Esophagus muscularis mucosa (tissue), 4 donors: ENCODE measurements at regions of chr3 and their contacts with region 1.

Region 1: DNA sequence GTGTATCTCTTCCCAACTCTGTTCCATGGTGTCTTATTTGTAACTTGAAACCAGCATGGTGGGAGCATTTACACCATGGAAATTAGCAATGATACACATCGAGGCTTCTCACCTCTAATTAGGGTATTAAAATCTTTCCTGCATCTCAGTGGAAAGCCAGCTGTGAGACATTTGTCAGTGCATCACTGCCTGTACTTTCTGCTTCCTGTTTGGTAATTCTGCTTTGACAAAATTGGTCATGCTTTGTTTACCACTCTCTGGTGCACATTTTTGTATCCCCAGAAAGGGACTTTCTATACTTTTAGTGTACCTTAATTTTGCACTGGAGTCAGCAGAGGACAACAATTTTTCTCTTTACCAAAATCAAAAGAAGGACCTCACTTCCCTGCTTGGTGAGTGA is 402.1 kb downstream of the PDCD6IP start:
- DNase-seq: no peak
- H3K4me3 ChIP-seq: no peak overlapping the region
- H3K27ac ChIP-seq: no peak overlapping the region
- H3K4me1 ChIP-seq: peaks cover 0 to 14% (median 3%) of the 10 kb centered on the region in 4 donors
- H3K27me3 ChIP-seq: no peaks in the 10 kb centered on the region
- CTCF ChIP-seq: no peak
- EP300 ChIP-seq: no peak
- POLR2A ChIP-seq: no peak

Region 2: GRCh38 chr3:34008191-34008590 is 192.4 kb before region 1 on chr3:
- intact Hi-C with region 1: loop called (anchors 10 kb)
- DNase-seq: peak; percentile 78
- H3K4me3 ChIP-seq: no peak overlapping the region
- H3K27ac ChIP-seq: no peak overlapping the region
- H3K4me1 ChIP-seq: peaks cover 0 to 20% (median 16%) of the 10 kb centered on the region in 4 donors
- H3K27me3 ChIP-seq: no peaks in the 10 kb centered on the region
- CTCF ChIP-seq: no peak
- EP300 ChIP-seq: no peak
- POLR2A ChIP-seq: no peak